ENCODE measurements at regions of chr1 and their contacts with region 1.

Region 1: DNA sequence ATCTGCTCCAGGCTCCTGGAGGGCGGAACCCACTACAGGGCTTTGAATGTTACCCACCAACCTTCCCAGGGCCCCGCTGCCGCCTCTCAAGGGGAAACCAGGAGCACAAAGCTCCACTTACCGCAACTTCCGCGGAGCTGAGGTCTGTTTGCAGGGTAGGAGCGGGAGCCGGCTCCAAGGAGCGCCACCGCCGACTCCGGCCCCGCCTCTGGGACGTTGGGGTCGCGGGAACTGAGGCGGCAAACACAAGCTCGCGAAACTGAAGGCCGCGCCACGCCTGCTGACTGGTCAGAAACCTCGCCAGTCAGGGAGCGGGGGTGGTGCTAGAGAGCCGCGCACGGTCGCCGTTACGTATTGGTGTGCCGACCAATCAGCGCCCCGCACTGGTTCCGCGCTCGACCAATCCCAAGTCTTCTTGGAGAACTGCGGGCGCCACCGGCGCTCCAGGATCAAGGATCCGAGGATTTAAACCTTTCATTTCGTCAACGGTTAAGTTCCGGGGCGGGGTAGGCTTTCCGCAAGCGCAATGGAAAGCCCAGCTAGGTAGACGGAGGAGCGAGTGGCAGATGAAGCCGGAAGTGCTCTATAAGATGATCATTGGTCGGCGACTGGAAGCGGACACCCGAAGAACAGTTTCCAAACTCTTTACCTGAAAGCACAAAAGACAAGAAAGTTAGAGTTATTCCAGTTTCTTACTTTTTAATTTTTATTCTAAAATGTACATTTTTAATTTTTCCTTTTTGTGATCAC is at the start of gene STIL:
- DNase-seq: peak; percentile 92 to 99
- ATAC-seq: peak; percentile 99
- H3K4me3 ChIP-seq: peak within 1 kb of the TSS; percentile 81
- H3K27ac ChIP-seq: peak within 1 kb of the TSS; percentile 88 to 94
- H3K4me1 ChIP-seq: no peaks in the 10 kb centered on the region
- CTCF ChIP-seq: no peak
- EP300 ChIP-seq: no peak
- POLR2A ChIP-seq: peak; percentile 39; the same call in 1 of the 2 replicates
- RAD21 ChIP-seq: no peak
- polyA plus RNA-seq, gene STIL: 19.5 and 21.7 TPM in 2 replicates

Region 2: GRCh38 chr1:47241114-47242113 is 72.7 kb before region 1 on chr1:
- CTCF ChIA-PET with region 1: no interaction called
- POLR2A ChIA-PET with region 1: no interaction called
- DNase-seq: no peak
- ATAC-seq: no peak
- H3K4me3 ChIP-seq: no peak overlapping the region
- H3K27ac ChIP-seq: no peak overlapping the region
- H3K4me1 ChIP-seq: no peaks in the 10 kb centered on the region
- CTCF ChIP-seq: no peak
- EP300 ChIP-seq: no peak
- POLR2A ChIP-seq: no peak
- RAD21 ChIP-seq: no peak

Region 3: GRCh38 chr1:47298025-47298699 is 15.9 kb before region 1 on chr1:
- CTCF ChIA-PET with region 1: no interaction called
- POLR2A ChIA-PET with region 1: no interaction called
- DNase-seq: no peak
- ATAC-seq: no peak
- H3K4me3 ChIP-seq: no peak overlapping the region
- H3K27ac ChIP-seq: no peak overlapping the region
- H3K4me1 ChIP-seq: no peaks in the 10 kb centered on the region
- CTCF ChIP-seq: no peak
- EP300 ChIP-seq: no peak
- POLR2A ChIP-seq: no peak
- RAD21 ChIP-seq: no peak

Region 4: GRCh38 chr1:47325530-47325929 is 11.4 kb after region 1 on chr1:
- CTCF ChIA-PET with region 1: interaction called, 5 read pairs
- POLR2A ChIA-PET with region 1: interaction called, 18 read pairs
- DNase-seq: peak; percentile 14 to 63
- ATAC-seq: peak; percentile 73 to 84
- H3K4me3 ChIP-seq: no peak overlapping the region
- H3K27ac ChIP-seq: 0 out of 6 replicates have a peak overlapping the region, but pooled peaks of 1 of the 2 experiments have one; percentile 18
- H3K4me1 ChIP-seq: peaks cover 18% of the 10 kb centered on the region; the same call in 2 of the 3 replicates
- CTCF ChIP-seq: no peak
- EP300 ChIP-seq: no peak
- POLR2A ChIP-seq: no peak
- RAD21 ChIP-seq: no peak

Region 5: GRCh38 chr1:47333922-47334764 is 20.1 kb after region 1 on chr1:
- CTCF ChIA-PET with region 1: interaction called, 4 read pairs
- POLR2A ChIA-PET with region 1: interaction called, 27 read pairs
- DNase-seq: peak; percentile 80 to 87
- ATAC-seq: peak; percentile 94 to 95
- H3K4me3 ChIP-seq: peak overlapping the region; percentile 79
- H3K27ac ChIP-seq: peak overlapping the region; percentile 90 to 99
- H3K4me1 ChIP-seq: peaks cover 28% of the 10 kb centered on the region
- CTCF ChIP-seq: peak; percentile 35
- EP300 ChIP-seq: no peak
- POLR2A ChIP-seq: peak; percentile 46
- RAD21 ChIP-seq: no peak

Measured in A549 (cell line).